Endothelial cell of umbilical vein (primary cell): ENCODE measurements at regions of chr6 and their contacts with region 1.

Region 1: GRCh38 chr6:34610819-34611477 is 54.8 kb upstream of the SPDEF start:
- DNase-seq: peak; percentile 51
- H3K4me3 ChIP-seq: no peak overlapping the region
- H3K27ac ChIP-seq: peak overlapping the region; percentile 65
- H3K4me1 ChIP-seq: peaks cover 10% of the 10 kb centered on the region
- H3K27me3 ChIP-seq: no peaks in the 10 kb centered on the region
- CTCF ChIP-seq: no peak
- POLR2A ChIP-seq: no peak

Region 2: GRCh38 chr6:34161857-34162515 is 449.0 kb before region 1 on chr6:
- CTCF ChIA-PET with region 1: interaction called, 54 read pairs
- POLR2A ChIA-PET with region 1: no interaction called
- dilution Hi-C with region 1: no loop called
- intact Hi-C with region 1: loop called (anchors 1 kb)
- DNase-seq: no peak
- H3K4me3 ChIP-seq: no peak overlapping the region
- H3K27ac ChIP-seq: no peak overlapping the region
- H3K4me1 ChIP-seq: no peaks in the 10 kb centered on the region
- H3K27me3 ChIP-seq: no peaks in the 10 kb centered on the region
- CTCF ChIP-seq: no peak
- POLR2A ChIP-seq: no peak

Region 3: DNA sequence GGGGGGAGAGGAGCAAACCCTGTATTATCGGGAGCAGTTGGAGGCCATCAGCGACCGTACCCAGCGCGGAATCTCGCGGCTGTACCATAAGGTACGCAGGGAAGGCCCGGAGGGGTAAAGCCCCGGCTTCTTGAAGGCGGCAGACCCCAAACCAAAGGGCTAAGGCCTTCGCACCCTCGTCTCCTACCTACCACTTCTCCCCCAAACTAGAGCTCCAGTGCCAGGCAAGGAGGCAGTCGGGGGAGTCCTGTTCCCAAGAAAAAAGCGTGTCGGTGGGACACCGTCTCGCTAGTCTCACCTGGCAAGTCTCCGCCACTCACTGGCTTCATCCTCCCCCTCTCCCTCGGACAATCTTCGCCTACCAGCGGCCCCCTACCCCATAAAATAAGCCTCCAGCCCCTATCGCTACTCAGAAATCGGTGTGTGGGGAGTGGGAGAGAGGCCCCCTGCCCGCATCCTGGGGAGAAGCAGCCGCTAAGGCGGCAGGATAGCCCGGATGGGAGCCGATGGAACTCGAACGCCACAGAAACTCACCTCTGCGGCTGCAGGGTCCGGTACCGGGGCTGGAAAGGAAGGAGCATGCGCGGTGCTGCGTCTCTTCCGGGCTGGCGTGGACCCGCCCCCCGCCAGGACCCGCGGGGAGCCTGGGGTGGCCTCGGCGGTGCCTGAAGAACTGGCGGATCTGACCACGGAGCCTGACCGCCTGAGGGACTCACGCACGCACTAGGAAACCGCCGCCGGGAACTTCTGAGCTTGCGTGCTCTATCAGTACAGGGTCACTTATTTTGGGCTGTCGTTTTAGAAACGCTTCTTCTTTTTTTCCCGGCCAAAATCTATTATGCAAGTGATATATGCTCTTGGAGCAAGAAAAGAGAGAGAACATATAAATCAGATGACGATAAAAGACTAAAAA is 185.2 kb before region 1 on chr6 and contains the start of gene RPS10:
- CTCF ChIA-PET with region 1: interaction called, 20 read pairs
- POLR2A ChIA-PET with region 1: interaction called, 8 read pairs
- dilution Hi-C with region 1: no loop called
- intact Hi-C with region 1: loop called (anchors 1 kb)
- DNase-seq: peak; percentile 96
- H3K4me3 ChIP-seq: peak within 1 kb of the TSS; percentile 66 to 95 (median 90)
- H3K27ac ChIP-seq: peak within 1 kb of the TSS; percentile 79
- H3K4me1 ChIP-seq: peaks cover 15% of the 10 kb centered on the region
- H3K27me3 ChIP-seq: no peaks in the 10 kb centered on the region
- CTCF ChIP-seq: no peak
- POLR2A ChIP-seq: peak; percentile 91
- total RNA-seq, gene RPS10: 1,295 and 1,416 TPM in 2 replicates

Region 4: GRCh38 chr6:34526992-34527728 is 83.8 kb before region 1 on chr6:
- CTCF ChIA-PET with region 1: interaction called, 39 read pairs
- POLR2A ChIA-PET with region 1: no interaction called
- dilution Hi-C with region 1: no loop called
- intact Hi-C with region 1: loop called (anchors 1 kb)
- DNase-seq: peak; percentile 89
- H3K4me3 ChIP-seq: peak overlapping the region in 2 of 3 experiments; percentile 4 to 42
- H3K27ac ChIP-seq: no peak overlapping the region
- H3K4me1 ChIP-seq: peaks cover 2% of the 10 kb centered on the region
- H3K27me3 ChIP-seq: no peaks in the 10 kb centered on the region
- CTCF ChIP-seq: peak; percentile 56 to 86
- POLR2A ChIP-seq: peak; percentile 42

Region 5: GRCh38 chr6:34595332-34596184 is 15.4 kb before region 1 on chr6:
- CTCF ChIA-PET with region 1: interaction called, 18 read pairs
- POLR2A ChIA-PET with region 1: no interaction called
- dilution Hi-C with region 1: no loop called
- intact Hi-C with region 1: no loop called
- DNase-seq: no peak
- H3K4me3 ChIP-seq: no peak overlapping the region
- H3K27ac ChIP-seq: no peak overlapping the region
- H3K4me1 ChIP-seq: no peaks in the 10 kb centered on the region
- H3K27me3 ChIP-seq: no peaks in the 10 kb centered on the region
- CTCF ChIP-seq: no peak
- POLR2A ChIP-seq: no peak